ENCODE measurements at regions of chr17 and their contacts with region 1.

Region 1: DNA sequence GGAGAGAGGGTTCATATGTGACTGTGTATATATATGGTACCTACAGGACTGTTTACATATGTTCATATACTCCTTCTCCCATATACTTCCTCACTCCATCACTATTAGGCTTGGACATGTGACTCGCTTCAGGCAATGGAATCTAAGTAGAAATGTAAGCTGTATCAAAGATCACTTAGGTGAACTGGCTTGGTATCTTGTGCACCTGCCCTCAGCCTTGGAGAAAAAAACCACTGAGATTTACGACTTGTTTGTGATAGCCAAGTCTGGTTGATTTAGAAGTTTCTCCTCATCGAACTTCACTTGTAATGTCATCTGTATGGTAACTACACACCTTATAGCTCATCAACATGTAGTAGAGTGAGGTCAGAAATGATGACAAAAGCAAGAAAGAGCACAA is 59.9 kb downstream of the FBXL20 start:
- DNase-seq: no peak
- H3K4me3 ChIP-seq: no peak overlapping the region
- H3K27ac ChIP-seq: no peak overlapping the region
- H3K4me1 ChIP-seq: no peaks in the 10 kb centered on the region
- H3K27me3 ChIP-seq: no peaks in the 10 kb centered on the region
- CTCF ChIP-seq: no peak

Region 2: GRCh38 chr17:39294060-39294459 is 47.5 kb before region 1 on chr17:
- CTCF ChIA-PET with region 1: no interaction called
- dilution Hi-C with region 1: loop called (anchors 5 kb)
- in situ Hi-C with region 1: no loop called
- intact Hi-C with region 1: no loop called
- DNase-seq: no peak
- H3K4me3 ChIP-seq: no peak overlapping the region
- H3K27ac ChIP-seq: no peak overlapping the region
- H3K4me1 ChIP-seq: no peaks in the 10 kb centered on the region
- H3K27me3 ChIP-seq: no peaks in the 10 kb centered on the region
- CTCF ChIP-seq: no peak